GM12878 (cell line): ENCODE measurements at regions of chr3 and their contacts with region 1.

Region 1: DNA sequence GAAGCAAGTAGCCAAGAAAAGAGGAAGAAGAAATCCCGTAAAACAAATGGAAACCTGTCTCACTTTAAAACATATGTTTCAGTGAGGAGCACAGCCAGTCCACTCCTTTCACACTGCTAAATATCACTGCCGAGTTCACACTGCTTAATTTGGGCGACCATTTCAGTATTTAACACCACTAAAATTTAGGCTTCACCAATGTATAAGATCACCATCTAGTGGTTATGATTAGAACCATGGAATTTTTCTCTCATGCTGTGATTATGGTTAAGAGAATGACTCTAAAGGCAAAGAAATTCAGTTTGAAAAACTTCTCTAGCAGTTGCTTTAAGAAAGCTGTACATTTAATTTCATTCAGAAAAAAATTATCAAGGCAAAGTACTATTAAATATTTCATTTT is 16.6 kb downstream of the SLC4A7 start:
- DNase-seq: no peak
- ATAC-seq: peak; percentile 92
- H3K4me3 ChIP-seq: no peak overlapping the region
- H3K27ac ChIP-seq: 0 out of 2 replicates have a peak overlapping the region, but pooled peaks have one; percentile 1
- H3K4me1 ChIP-seq: no peaks in the 10 kb centered on the region
- H3K27me3 ChIP-seq: no peaks in the 10 kb centered on the region
- CTCF ChIP-seq: peak; percentile 41 to 66 (median 52); a peak in 5 of 6 replicates
- EP300 ChIP-seq: no peak
- POLR2A ChIP-seq: no peak
- RAD21 ChIP-seq: peak; percentile 64

Region 2: GRCh38 chr3:25582242-25582641 is 1885.3 kb before region 1 on chr3:
- CTCF ChIA-PET with region 1: no interaction called
- POLR2A ChIA-PET with region 1: no interaction called
- RAD21 ChIA-PET with region 1: no interaction called
- SMC1A ChIA-PET with region 1: no interaction called
- in situ Hi-C with region 1: no loop called
- intact Hi-C with region 1: no loop called
- DNase-seq: no peak
- ATAC-seq: no peak
- H3K4me3 ChIP-seq: no peak overlapping the region
- H3K27ac ChIP-seq: no peak overlapping the region
- H3K4me1 ChIP-seq: no peaks in the 10 kb centered on the region
- H3K27me3 ChIP-seq: no peaks in the 10 kb centered on the region; a peak in 1 of 4 replicates
- CTCF ChIP-seq: no peak
- EP300 ChIP-seq: no peak
- POLR2A ChIP-seq: no peak
- RAD21 ChIP-seq: no peak

Region 3: GRCh38 chr3:27312044-27312668 is 155.4 kb before region 1 on chr3:
- CTCF ChIA-PET with region 1: interaction called, 58 read pairs
- POLR2A ChIA-PET with region 1: no interaction called
- RAD21 ChIA-PET with region 1: interaction called, 12 read pairs
- SMC1A ChIA-PET with region 1: interaction called, 15 read pairs
- in situ Hi-C with region 1: loop called (anchors 5 kb)
- intact Hi-C with region 1: loop called (anchors 1 kb)
- DNase-seq: peak; percentile 15
- ATAC-seq: peak; percentile 94
- H3K4me3 ChIP-seq: no peak overlapping the region
- H3K27ac ChIP-seq: no peak overlapping the region
- H3K4me1 ChIP-seq: no peaks in the 10 kb centered on the region
- H3K27me3 ChIP-seq: no peaks in the 10 kb centered on the region
- CTCF ChIP-seq: peak; percentile 64 to 77 (median 76); a peak in 5 of 6 replicates
- EP300 ChIP-seq: no peak
- POLR2A ChIP-seq: no peak
- RAD21 ChIP-seq: peak; percentile 83

Region 4: GRCh38 chr3:27349832-27350231 is 117.7 kb before region 1 on chr3:
- CTCF ChIA-PET with region 1: interaction called, 15 read pairs
- POLR2A ChIA-PET with region 1: no interaction called
- RAD21 ChIA-PET with region 1: interaction called, 10 read pairs
- SMC1A ChIA-PET with region 1: interaction called, 10 read pairs
- in situ Hi-C with region 1: no loop called
- intact Hi-C with region 1: no loop called
- DNase-seq: peak; percentile 56
- ATAC-seq: peak; percentile 85
- H3K4me3 ChIP-seq: no peak overlapping the region
- H3K27ac ChIP-seq: peak overlapping the region; percentile 73
- H3K4me1 ChIP-seq: peaks cover 10% of the 10 kb centered on the region
- H3K27me3 ChIP-seq: no peaks in the 10 kb centered on the region
- CTCF ChIP-seq: no peak
- EP300 ChIP-seq: no peak
- POLR2A ChIP-seq: no peak
- RAD21 ChIP-seq: no peak

Region 5: DNA sequence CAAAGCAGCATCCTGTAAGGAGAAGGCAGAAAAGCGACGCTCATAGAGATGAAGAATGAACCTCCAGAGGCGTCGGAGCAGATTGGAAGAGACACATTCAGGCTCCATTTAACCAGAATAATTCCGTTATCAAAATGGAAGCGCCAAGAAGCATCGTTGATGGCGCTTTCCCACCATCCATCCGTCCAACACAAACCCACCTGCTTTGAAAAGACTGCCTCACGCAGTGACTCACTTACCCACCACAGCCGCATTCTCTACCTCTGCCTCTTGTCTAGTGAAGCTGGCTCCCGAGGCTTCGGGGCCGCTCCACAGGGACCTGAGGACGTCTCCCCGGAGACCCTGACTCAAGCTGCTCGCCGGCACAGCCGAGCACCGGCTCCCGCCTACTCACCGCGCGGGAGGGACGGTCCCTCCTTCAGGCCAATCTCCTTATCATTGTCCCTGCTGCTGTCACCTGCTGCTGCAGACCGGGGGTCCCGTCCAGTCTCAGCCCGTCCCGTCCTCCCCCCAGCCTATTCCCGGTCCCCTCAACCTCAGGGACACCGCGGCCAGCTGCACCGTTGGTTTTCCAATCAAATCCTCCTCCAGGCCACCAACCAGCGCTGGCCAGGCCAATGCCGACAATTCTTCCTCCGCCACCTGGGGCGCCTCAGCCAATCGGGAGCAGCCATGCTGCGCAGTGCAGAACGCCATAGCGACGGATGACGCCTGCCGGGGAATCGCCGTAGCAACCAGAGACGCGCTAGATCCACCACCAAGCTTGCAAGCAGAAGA is 98.5 kb before region 1 on chr3 and contains the start of gene NEK10:
- CTCF ChIA-PET with region 1: interaction called, 4 read pairs
- POLR2A ChIA-PET with region 1: no interaction called
- RAD21 ChIA-PET with region 1: interaction called, 4 read pairs
- SMC1A ChIA-PET with region 1: interaction called, 11 read pairs
- in situ Hi-C with region 1: no loop called
- intact Hi-C with region 1: no loop called
- DNase-seq: peak; percentile 55
- ATAC-seq: peak; percentile 100
- H3K4me3 ChIP-seq: peak within 1 kb of the TSS; percentile 69
- H3K27ac ChIP-seq: no peak within 1 kb of the TSS
- H3K4me1 ChIP-seq: no peaks in the 10 kb centered on the region
- H3K27me3 ChIP-seq: no peaks in the 10 kb centered on the region
- CTCF ChIP-seq: no peak
- EP300 ChIP-seq: no peak
- POLR2A ChIP-seq: peak; percentile 59; the same call in 1 of the 2 replicates
- RAD21 ChIP-seq: no peak
- polyA plus RNA-seq, gene NEK10: not detected

Region 6: GRCh38 chr3:27659279-27660021 is 191.9 kb after region 1 on chr3:
- CTCF ChIA-PET with region 1: interaction called, 11 read pairs
- POLR2A ChIA-PET with region 1: no interaction called
- RAD21 ChIA-PET with region 1: no interaction called
- SMC1A ChIA-PET with region 1: interaction called, 4 read pairs
- in situ Hi-C with region 1: no loop called
- intact Hi-C with region 1: no loop called
- DNase-seq: no peak
- ATAC-seq: peak; percentile 85
- H3K4me3 ChIP-seq: no peak overlapping the region
- H3K27ac ChIP-seq: no peak overlapping the region
- H3K4me1 ChIP-seq: no peaks in the 10 kb centered on the region
- H3K27me3 ChIP-seq: no peaks in the 10 kb centered on the region
- CTCF ChIP-seq: peak; percentile 69 to 86 (median 80)
- EP300 ChIP-seq: no peak
- POLR2A ChIP-seq: no peak
- RAD21 ChIP-seq: peak; percentile 55

Region 7: GRCh38 chr3:27813255-27813654 is 345.7 kb after region 1 on chr3:
- CTCF ChIA-PET with region 1: no interaction called
- POLR2A ChIA-PET with region 1: no interaction called
- RAD21 ChIA-PET with region 1: no interaction called
- SMC1A ChIA-PET with region 1: no interaction called
- in situ Hi-C with region 1: no loop called
- intact Hi-C with region 1: no loop called
- DNase-seq: no peak
- ATAC-seq: no peak
- H3K4me3 ChIP-seq: no peak overlapping the region
- H3K27ac ChIP-seq: no peak overlapping the region
- H3K4me1 ChIP-seq: no peaks in the 10 kb centered on the region
- H3K27me3 ChIP-seq: no peaks in the 10 kb centered on the region
- CTCF ChIP-seq: no peak
- EP300 ChIP-seq: no peak
- POLR2A ChIP-seq: no peak
- RAD21 ChIP-seq: no peak